ENCODE measurements at regions of chr1 and their contacts with region 1.

Region 1: GRCh38 chr1:85259118-85259911 is at the start of gene C1orf52:
- DNase-seq: peak; percentile 44
- H3K4me3 ChIP-seq: peak within 1 kb of the TSS; percentile 100
- H3K27me3 ChIP-seq: no peaks in the 10 kb centered on the region
- CTCF ChIP-seq: peak; percentile 98
- polyA plus RNA-seq, gene C1orf52: 29.6 and 30.5 TPM in 2 replicates

Region 2: DNA sequence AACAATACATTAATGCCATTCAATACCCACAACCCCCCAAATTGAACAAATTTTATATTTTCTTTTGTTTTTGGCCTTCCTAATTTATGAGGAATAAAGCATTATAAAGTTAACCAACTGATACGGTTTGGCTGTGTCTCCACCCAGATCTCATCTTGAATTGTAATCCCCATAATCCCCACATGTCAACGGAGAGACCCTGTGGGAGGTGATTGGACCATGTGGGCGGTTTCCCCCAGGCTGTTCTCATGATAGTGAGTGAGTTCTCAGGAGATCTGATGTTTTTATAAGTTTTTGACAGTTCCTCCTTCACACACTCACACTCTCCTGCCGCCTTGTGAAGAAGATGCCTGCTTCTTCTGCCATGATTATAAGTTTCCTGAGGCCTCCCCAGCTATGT is 204.7 kb before region 1 on chr1:
- CTCF ChIA-PET with region 1: no interaction called
- POLR2A ChIA-PET with region 1: no interaction called
- DNase-seq: no peak
- H3K4me3 ChIP-seq: no peak overlapping the region
- H3K27me3 ChIP-seq: peaks cover 3% of the 10 kb centered on the region
- CTCF ChIP-seq: no peak

Region 3: GRCh38 chr1:85128341-85128740 is 131.0 kb before region 1 on chr1:
- CTCF ChIA-PET with region 1: interaction called, 3 read pairs
- POLR2A ChIA-PET with region 1: interaction called, 18 read pairs
- DNase-seq: peak; percentile 22
- H3K4me3 ChIP-seq: no peak overlapping the region
- H3K27me3 ChIP-seq: no peaks in the 10 kb centered on the region
- CTCF ChIP-seq: no peak

Region 4: DNA sequence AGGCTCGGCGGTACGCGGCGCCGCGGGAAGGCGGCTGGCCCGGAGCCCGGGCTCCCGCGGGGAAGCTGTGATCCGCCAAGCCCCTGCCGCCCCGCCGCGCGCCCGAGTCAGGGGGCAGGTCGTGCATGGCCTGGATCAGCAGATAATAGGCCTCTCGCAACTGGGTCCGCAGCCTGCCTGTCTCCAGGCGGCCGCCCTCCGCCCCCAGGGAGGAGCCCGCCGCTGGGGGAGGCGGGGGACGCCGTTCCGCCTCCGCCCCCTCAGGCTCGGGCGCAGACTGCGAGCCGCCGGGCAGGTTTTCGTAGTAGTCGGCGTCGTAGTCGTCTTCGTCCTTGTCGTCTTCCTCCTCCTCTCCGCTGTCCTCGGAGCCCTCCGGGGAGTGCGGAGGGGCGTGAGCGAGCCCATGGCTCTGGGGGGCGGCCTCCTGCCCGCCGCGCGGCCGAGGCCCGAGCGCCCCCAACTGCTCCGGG is 58.4 kb before region 1 on chr1 and contains the start of gene SYDE2:
- CTCF ChIA-PET with region 1: interaction called, 13 read pairs
- POLR2A ChIA-PET with region 1: no interaction called
- DNase-seq: no peak
- H3K4me3 ChIP-seq: peak within 1 kb of the TSS; percentile 64
- H3K27me3 ChIP-seq: no peaks in the 10 kb centered on the region
- CTCF ChIP-seq: no peak
- polyA plus RNA-seq, gene SYDE2: 4.4 and 6.1 TPM in 2 replicates

Region 5: DNA sequence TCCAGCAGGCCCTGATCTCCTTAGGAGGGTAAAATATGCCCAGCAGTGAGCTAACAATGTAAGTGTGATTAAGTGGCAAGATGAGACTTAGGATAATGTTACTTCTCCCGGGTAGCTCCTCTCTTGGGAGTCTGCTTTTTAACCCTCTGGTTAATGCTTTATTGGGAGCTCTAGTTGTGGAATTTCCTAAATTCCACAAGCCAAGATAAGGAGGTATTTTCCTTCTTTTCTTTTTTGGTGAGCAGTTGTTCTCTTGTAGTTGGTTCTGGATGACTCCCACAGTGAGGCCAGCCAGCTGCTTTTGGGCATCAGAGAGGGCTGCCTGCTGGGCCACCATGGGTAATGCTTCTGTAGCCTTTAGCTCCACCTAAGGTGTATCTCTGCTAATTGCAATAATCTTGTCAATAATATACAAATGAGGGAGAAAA is 19.1 kb before region 1 on chr1:
- CTCF ChIA-PET with region 1: interaction called, 14 read pairs
- POLR2A ChIA-PET with region 1: interaction called, 5 read pairs
- DNase-seq: no peak
- H3K4me3 ChIP-seq: no peak overlapping the region
- H3K27me3 ChIP-seq: no peaks in the 10 kb centered on the region
- CTCF ChIP-seq: no peak

Region 6: GRCh38 chr1:85276215-85276977 is 17.1 kb after region 1 on chr1 and contains the start of gene BCL10:
- CTCF ChIA-PET with region 1: interaction called, 74 read pairs
- POLR2A ChIA-PET with region 1: interaction called, 4 read pairs
- DNase-seq: peak; percentile 93
- H3K4me3 ChIP-seq: peak within 1 kb of the TSS; percentile 90
- H3K27me3 ChIP-seq: no peaks in the 10 kb centered on the region
- CTCF ChIP-seq: no peak
- polyA plus RNA-seq, gene BCL10: 7.8 and 11.6 TPM in 2 replicates

Region 7: GRCh38 chr1:85427331-85427730 is 168.0 kb after region 1 on chr1:
- CTCF ChIA-PET with region 1: no interaction called
- POLR2A ChIA-PET with region 1: no interaction called
- DNase-seq: peak; percentile 20
- H3K4me3 ChIP-seq: no peak overlapping the region
- H3K27me3 ChIP-seq: no peaks in the 10 kb centered on the region
- CTCF ChIP-seq: no peak

Measured in BJ (cell line).